ENCODE measurements at regions of chr2 and their contacts with region 1.

Region 1: GRCh38 chr2:25991965-25992364 is 9.7 kb upstream of the KIF3C start:
- DNase-seq: no peak
- ATAC-seq: peak; percentile 15
- H3K4me3 Mint-ChIP-seq: no peak overlapping the region
- H3K27ac Mint-ChIP-seq: no peak overlapping the region
- H3K4me1 Mint-ChIP-seq: peaks cover 7% of the 10 kb centered on the region
- H3K27me3 Mint-ChIP-seq: no peaks in the 10 kb centered on the region
- CTCF ChIP-seq: no peak

Region 2: DNA sequence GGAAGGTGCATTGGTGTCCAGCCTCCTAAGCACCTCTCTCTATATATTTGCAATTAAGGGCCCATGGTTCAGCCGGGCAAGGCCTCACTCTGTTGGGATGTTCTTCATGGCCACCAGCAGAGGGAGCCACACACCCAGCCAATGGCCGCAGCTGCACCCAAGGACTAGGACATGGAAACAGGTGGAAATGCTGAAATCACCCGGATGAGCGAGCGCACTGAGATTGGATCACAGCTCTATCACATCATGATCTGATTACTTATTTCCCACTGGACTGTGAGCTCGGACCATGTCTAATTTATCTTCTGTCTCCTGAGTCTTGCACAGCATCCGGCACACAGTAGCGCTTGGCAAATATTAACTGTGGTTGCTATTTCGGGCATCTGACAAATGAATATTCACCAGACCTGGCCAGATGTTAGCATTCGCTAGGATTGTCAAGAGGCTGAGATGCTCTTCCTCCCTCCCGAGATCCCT is 40.9 kb before region 1 on chr2:
- CTCF ChIA-PET with region 1: interaction called, 16 read pairs
- POLR2A ChIA-PET with region 1: no interaction called
- intact Hi-C with region 1: no loop called
- DNase-seq: peak; percentile 77
- ATAC-seq: peak; percentile 95
- H3K4me3 Mint-ChIP-seq: no peak overlapping the region
- H3K27ac Mint-ChIP-seq: no peak overlapping the region
- H3K4me1 Mint-ChIP-seq: no peaks in the 10 kb centered on the region
- H3K27me3 Mint-ChIP-seq: no peaks in the 10 kb centered on the region
- CTCF ChIP-seq: peak; percentile 87

Region 3: GRCh38 chr2:25960920-25961319 is 31.0 kb before region 1 on chr2:
- CTCF ChIA-PET with region 1: interaction called, 11 read pairs
- POLR2A ChIA-PET with region 1: interaction called, 4 read pairs
- intact Hi-C with region 1: no loop called
- DNase-seq: no peak
- ATAC-seq: no peak
- H3K4me3 Mint-ChIP-seq: no peak overlapping the region
- H3K27ac Mint-ChIP-seq: no peak overlapping the region
- H3K4me1 Mint-ChIP-seq: peaks cover 6% of the 10 kb centered on the region
- H3K27me3 Mint-ChIP-seq: no peaks in the 10 kb centered on the region
- CTCF ChIP-seq: no peak

Region 4: DNA sequence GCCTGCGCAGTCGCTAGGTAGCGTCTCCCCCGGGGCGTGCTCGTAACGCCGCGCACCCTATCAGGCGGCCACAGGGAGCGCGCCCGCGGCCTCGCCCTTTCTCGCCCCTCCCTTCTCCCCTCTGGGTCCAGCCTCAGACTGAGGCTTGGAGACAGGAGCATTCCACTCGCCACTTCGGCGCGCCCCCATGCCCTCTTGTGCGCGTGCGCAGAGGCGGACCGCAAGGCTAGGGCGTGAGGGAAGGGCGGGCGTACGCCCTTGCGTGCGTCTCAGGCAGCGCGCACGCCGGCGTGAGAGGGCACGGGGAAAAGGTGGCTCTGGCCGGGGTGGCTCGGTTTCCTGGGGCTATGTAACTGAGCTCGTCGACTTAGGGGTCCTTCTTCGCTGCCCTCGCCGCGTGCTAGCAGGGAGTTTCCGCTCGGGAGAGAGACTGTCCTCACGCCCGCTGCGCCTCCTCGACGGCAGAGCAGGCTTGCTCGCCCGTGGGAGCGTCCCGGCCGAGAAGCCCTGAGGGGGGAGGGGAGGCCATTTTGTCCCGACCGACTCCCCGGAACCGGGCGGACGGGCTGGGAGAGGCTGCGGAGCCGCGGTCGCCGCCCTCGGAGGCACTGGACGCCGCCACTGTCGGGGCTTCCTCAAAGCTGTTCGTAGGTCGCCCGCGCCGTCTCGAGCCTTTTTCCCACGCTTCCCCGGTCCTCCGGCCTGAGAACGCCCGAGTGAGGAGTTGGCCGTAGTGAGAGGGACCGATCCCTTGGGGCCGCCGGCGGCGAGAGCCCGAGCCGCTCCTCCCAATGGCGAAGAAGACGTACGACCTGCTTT is 42.1 kb after region 1 on chr2 and contains the start of gene RAB10:
- CTCF ChIA-PET with region 1: interaction called, 16 read pairs
- POLR2A ChIA-PET with region 1: no interaction called
- intact Hi-C with region 1: no loop called
- DNase-seq: peak; percentile 99
- ATAC-seq: peak; percentile 96
- H3K4me3 Mint-ChIP-seq: peak within 1 kb of the TSS; percentile 94
- H3K27ac Mint-ChIP-seq: peak within 1 kb of the TSS; percentile 94
- H3K4me1 Mint-ChIP-seq: peaks cover 25% of the 10 kb centered on the region
- H3K27me3 Mint-ChIP-seq: no peaks in the 10 kb centered on the region
- CTCF ChIP-seq: no peak
- total RNA-seq, gene RAB10: 89.5 to 102 TPM

Region 5: DNA sequence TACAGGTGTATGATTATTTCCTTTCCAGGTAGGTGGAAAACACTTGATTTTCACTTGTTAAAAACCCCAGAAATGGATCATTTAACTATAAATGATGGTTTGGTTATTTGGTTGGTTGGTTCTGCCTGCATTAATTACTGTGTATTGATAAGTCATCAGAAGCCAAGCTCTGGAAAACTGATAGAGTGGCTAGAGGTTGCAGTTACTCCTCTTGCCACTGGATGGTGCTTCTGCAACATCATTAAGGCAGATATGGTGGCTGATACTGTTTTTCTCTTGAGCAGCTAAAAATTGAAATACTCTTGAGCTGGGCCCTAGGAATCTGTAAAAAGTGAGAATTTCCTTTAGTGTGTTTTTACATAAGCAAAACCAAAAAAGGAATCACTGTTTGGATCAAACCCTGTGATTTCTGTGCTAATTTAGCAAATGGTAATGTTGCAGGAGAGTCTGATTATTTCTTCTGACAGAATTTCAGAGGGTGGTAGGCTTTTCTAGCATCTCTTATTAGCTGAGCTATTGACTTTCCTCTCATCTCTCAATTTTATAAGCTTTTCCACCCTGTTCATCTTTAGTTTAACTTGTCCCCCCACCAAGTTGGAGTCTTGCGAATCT is 96.2 kb after region 1 on chr2:
- CTCF ChIA-PET with region 1: interaction called, 28 read pairs
- POLR2A ChIA-PET with region 1: no interaction called
- intact Hi-C with region 1: no loop called
- DNase-seq: peak; percentile 44
- ATAC-seq: peak; percentile 66
- H3K4me3 Mint-ChIP-seq: no peak overlapping the region
- H3K27ac Mint-ChIP-seq: no peak overlapping the region
- H3K4me1 Mint-ChIP-seq: peaks cover 66% of the 10 kb centered on the region
- H3K27me3 Mint-ChIP-seq: no peaks in the 10 kb centered on the region
- CTCF ChIP-seq: peak; percentile 87

Region 6: GRCh38 chr2:26144953-26145680 is 153.2 kb after region 1 on chr2:
- CTCF ChIA-PET with region 1: interaction called, 44 read pairs
- POLR2A ChIA-PET with region 1: no interaction called
- intact Hi-C with region 1: loop called (anchors 5 kb)
- DNase-seq: peak; percentile 82
- ATAC-seq: peak; percentile 94
- H3K4me3 Mint-ChIP-seq: no peak overlapping the region
- H3K27ac Mint-ChIP-seq: no peak overlapping the region
- H3K4me1 Mint-ChIP-seq: peaks cover 1% of the 10 kb centered on the region
- H3K27me3 Mint-ChIP-seq: peaks cover 4% of the 10 kb centered on the region
- CTCF ChIP-seq: peak; percentile 84